Ovary (tissue), 10 donors: ENCODE measurements at regions of chr6 and their contacts with region 1.

Region 1: DNA sequence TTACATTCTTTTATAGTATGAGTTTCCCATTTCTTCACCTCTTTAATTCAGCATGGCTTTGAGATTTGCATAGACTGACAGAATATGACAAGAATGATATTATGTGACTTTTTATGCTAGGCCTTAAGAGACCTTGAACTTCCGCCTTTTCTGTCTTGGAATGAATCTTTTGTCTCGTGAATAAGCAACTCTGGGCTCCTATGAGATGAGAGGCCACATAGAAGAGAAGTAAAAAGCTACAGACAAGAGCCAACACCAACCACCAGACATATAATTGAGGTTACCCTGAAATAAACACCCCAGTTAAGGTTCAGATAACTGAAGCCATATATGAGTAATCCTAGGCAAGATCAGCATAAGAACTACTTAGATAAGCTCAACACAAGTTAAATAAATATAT is 600.8 kb downstream of the MEI4 start:
- DNase-seq: no peak
- H3K4me3 ChIP-seq: no peak overlapping the region
- H3K27ac ChIP-seq: no peak overlapping the region
- H3K4me1 ChIP-seq: no peaks in the 10 kb centered on the region
- H3K27me3 ChIP-seq: no peaks in the 10 kb centered on the region
- CTCF ChIP-seq: no peak
- EP300 ChIP-seq: no peak
- POLR2A ChIP-seq: no peak

Region 2: DNA sequence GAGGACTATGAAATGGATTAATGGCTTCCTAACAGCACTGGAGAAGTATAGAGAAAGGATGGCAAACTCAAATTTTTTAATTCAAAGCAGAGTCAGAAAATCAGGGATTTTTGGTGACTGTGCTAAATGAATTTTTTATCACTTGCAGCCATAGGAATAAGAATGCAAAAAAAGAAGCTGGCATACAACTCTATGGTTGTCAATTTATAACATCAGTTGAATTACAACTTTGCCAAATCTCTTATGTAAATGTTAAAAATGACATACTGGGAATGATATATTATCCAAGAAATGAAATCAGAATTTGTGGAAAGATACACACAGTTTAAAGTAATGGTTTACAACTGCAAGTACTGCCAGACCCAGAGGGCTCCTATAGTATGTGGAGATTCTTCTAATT is 896.8 kb before region 1 on chr6:
- intact Hi-C with region 1: loop called in 1 of 4 experiments (anchors 5 kb)
- DNase-seq: no peak
- H3K4me3 ChIP-seq: no peak overlapping the region
- H3K27ac ChIP-seq: no peak overlapping the region
- H3K4me1 ChIP-seq: no peaks in the 10 kb centered on the region
- H3K27me3 ChIP-seq: no peaks in the 10 kb centered on the region
- CTCF ChIP-seq: no peak
- EP300 ChIP-seq: no peak
- POLR2A ChIP-seq: no peak

Region 3: GRCh38 chr6:78324213-78324612 is 70.6 kb after region 1 on chr6:
- intact Hi-C with region 1: loop called in 1 of 4 experiments (anchors 2 kb)
- DNase-seq: no peak
- H3K4me3 ChIP-seq: no peak overlapping the region
- H3K27ac ChIP-seq: no peak overlapping the region
- H3K4me1 ChIP-seq: no peaks in the 10 kb centered on the region
- H3K27me3 ChIP-seq: no peaks in the 10 kb centered on the region
- CTCF ChIP-seq: no peak
- EP300 ChIP-seq: no peak
- POLR2A ChIP-seq: no peak